Posterior vena cava (tissue), 2 donors: ENCODE measurements at regions of chr5 and their contacts with region 1.

Region 1: DNA sequence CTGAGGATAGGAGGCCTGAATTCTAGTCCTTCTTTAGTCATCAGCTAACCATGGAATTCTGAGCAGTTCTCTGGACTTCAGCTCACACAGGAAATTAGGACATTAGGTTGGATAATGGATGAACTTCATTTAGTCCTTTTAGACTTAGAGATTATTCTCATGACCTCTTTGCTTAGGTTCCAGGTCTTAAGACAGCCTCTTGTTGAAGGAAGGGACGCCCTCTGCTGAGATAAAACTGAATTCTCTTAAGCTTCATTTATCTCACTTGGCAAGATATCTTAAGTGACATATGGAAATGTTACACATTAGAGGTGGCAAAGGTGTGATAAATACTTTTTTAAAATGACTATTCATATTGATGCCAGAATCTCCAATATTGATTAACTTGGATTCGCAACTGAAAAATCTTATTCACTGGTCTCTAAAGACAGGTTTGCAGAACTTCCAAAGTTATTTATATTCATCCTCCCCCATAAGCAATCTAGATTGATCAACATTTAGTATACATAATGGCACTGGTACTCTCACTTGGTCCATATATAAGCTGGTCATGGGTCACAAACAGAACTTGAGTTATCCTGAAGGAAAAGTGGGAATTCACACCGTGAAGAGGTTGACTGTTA is 16.9 kb upstream of the ZNF366 start:
- DNase-seq: no peak

Region 2: GRCh38 chr5:72057816-72058215 is 466.3 kb before region 1 on chr5:
- intact Hi-C with region 1: no loop called
- DNase-seq: no peak

Region 3: GRCh38 chr5:72366324-72366976 is 157.6 kb before region 1 on chr5:
- intact Hi-C with region 1: loop called in 1 of 2 experiments (anchors 5 kb)
- DNase-seq: no peak